ENCODE measurements at regions of chr18 and their contacts with region 1.

Region 1: DNA sequence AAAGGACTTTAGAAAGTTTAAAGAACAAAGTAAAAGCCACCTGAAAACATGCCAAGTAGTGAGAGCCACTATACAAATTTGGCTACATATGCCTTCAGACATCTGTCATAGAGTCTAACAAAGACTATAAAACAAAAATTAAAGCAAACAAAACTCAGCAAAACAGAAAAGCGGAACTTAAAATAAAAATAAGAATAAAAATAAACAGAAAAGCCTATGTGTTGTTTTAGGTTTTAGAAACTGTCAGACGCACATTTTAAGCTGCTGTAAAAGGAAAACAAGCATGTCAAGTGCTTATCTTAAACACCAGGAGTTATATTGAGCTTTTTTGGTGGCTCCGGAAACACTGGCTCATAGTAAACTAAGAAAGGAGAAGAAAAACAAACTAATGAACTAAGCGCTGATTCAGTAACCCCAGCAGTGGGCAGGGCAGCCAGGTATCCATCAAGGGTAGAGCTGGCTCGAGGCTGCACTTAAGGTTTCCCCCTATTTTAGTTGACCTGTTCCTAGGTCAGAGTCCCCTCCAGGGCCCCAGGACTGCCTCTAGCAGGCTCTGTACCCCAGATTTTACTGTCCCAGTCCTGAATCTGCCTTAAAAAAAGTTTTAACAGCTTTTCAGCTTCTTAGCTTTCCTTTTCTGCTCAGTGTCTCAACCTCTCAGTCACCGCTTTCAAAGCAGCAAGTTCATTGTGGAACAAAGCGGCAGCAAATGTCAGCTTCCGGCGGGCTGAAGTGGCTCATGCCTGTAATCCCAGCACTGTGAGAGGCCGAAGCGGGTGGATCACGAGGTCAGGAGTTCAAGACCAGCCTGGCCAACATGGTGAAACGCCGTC is 15.4 kb upstream of the RMC1 start:
- DNase-seq: peak in 29 of 35 experiments; percentile 7 to 54 (median 24)
- ATAC-seq: peak; percentile 77 to 89 (median 80)
- H3K4me3 ChIP-seq: peak overlapping the region; percentile 32 to 50
- H3K4me3 Mint-ChIP-seq: peak overlapping the region; percentile 60 to 64 (median 60)
- H3K27ac ChIP-seq: peak overlapping the region; percentile 81
- H3K27ac Mint-ChIP-seq: peak overlapping the region; percentile 83 to 93
- H3K4me1 ChIP-seq: peaks cover 7 to 8% of the 10 kb centered on the region in 2 experiments
- H3K4me1 Mint-ChIP-seq: peaks cover 15 to 24% (median 19%) of the 10 kb centered on the region in 3 donors
- H3K27me3 ChIP-seq: no peaks in the 10 kb centered on the region
- H3K27me3 Mint-ChIP-seq: no peaks in the 10 kb centered on the region

Region 2: GRCh38 chr18:21747764-21748693 is 1739.9 kb before region 1 on chr18:
- CTCF ChIA-PET with region 1: no interaction called
- POLR2A ChIA-PET with region 1: interaction called in 1 of 2 experiments, 13 read pairs
- DNase-seq: no peak
- ATAC-seq: peak in 1 of 4 experiments; percentile 9
- H3K4me3 ChIP-seq: no peak overlapping the region
- H3K4me3 Mint-ChIP-seq: no peak overlapping the region
- H3K27ac ChIP-seq: peak overlapping the region; percentile 11
- H3K27ac Mint-ChIP-seq: peak overlapping the region; percentile 63 to 70
- H3K4me1 ChIP-seq: peaks cover 3% of the 10 kb centered on the region in 2 experiments
- H3K4me1 Mint-ChIP-seq: peaks cover 54 to 57% (median 56%) of the 10 kb centered on the region in 3 donors
- H3K27me3 ChIP-seq: no peaks in the 10 kb centered on the region
- H3K27me3 Mint-ChIP-seq: no peaks in the 10 kb centered on the region

Region 3: GRCh38 chr18:23883277-23883790 is 395.4 kb after region 1 on chr18:
- CTCF ChIA-PET with region 1: no interaction called
- POLR2A ChIA-PET with region 1: no interaction called
- DNase-seq: no peak
- ATAC-seq: no peak
- H3K4me3 ChIP-seq: no peak overlapping the region
- H3K4me3 Mint-ChIP-seq: no peak overlapping the region
- H3K27ac ChIP-seq: no peak overlapping the region
- H3K27ac Mint-ChIP-seq: no peak overlapping the region
- H3K4me1 ChIP-seq: peaks cover 6 to 15% of the 10 kb centered on the region in 2 experiments
- H3K4me1 Mint-ChIP-seq: peaks cover 20 to 32% (median 29%) of the 10 kb centered on the region in 3 donors
- H3K27me3 ChIP-seq: no peaks in the 10 kb centered on the region
- H3K27me3 Mint-ChIP-seq: no peaks in the 10 kb centered on the region

Region 4: DNA sequence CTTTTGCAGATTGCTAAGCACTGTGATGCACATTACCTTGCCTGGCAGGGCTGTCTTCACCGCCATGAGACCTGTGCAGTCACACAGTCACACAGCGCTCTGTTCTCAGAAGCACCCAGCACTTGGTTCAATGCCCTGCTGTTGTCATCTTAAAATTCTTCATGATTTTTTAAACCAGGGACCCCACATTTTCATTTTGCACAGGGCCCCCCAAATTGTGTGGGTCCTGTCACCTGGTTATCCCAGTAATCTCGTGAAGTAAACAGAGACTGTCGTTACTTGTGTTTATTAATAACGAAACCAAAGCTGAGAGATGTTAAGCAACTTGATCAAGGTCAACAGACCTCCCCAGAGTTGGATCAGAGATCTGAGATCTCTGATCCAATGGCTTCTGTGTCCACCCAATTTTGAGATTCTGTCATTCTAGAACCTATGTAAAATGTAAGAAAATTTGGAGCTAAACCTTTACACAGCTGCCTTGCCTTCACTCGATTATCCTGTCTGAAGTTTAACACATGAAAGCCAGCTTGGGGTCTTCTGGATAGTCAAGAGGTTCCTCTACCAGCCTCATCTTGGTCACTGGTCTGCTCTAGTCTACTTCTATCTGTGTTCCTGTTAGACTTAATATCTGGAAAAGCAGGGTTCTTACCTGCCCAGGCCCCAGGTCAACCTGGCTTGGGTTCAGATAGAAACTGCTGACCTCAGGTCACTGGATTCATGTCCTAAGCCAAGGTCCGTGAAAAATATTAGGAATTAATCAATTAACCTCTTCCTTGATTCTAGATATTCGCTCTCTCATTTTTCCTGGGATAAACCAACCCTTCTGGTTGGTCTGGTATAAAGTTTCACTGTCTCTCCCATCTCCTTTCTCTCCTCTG is 512.9 kb after region 1 on chr18:
- CTCF ChIA-PET with region 1: no interaction called
- POLR2A ChIA-PET with region 1: interaction called in 1 of 2 experiments, 10 read pairs
- DNase-seq: peak in 1 of 35 experiments; percentile 50
- ATAC-seq: peak; percentile 62 to 74 (median 68)
- H3K4me3 ChIP-seq: peak overlapping the region in 1 of 2 donors; percentile 16
- H3K4me3 Mint-ChIP-seq: peak overlapping the region; percentile 41 to 75 (median 61)
- H3K27ac ChIP-seq: peak overlapping the region; percentile 87
- H3K27ac Mint-ChIP-seq: peak overlapping the region; percentile 94 to 98
- H3K4me1 ChIP-seq: peaks cover 0 to 69% of the 10 kb centered on the region in 2 experiments
- H3K4me1 Mint-ChIP-seq: peaks cover 51 to 85% (median 68%) of the 10 kb centered on the region in 3 donors
- H3K27me3 ChIP-seq: no peaks in the 10 kb centered on the region
- H3K27me3 Mint-ChIP-seq: no peaks in the 10 kb centered on the region